Activated CD4-positive, alpha-beta T cell treated with anti-CD3 and anti-CD28 coated beads, Interleukin-2, amount 10 ng/mL, durations not matched to agents 24 days and 14 days (primary cell): ENCODE measurements at regions of chr10 and their contacts with region 1.

Region 1: GRCh38 chr10:68331455-68332258 is at the start of gene HNRNPH3:
- DNase-seq: peak; percentile 100
- H3K4me3 Mint-ChIP-seq: peak within 1 kb of the TSS; percentile 99
- H3K27ac Mint-ChIP-seq: peak within 1 kb of the TSS; percentile 100
- H3K4me1 Mint-ChIP-seq: peaks cover 47% of the 10 kb centered on the region
- H3K27me3 Mint-ChIP-seq: peaks cover 2% of the 10 kb centered on the region
- total RNA-seq, gene HNRNPH3: 200 and 206 TPM in 2 replicates

Region 2: GRCh38 chr10:67764012-67764822 is 567.4 kb before region 1 on chr10:
- intact Hi-C with region 1: loop called (anchors 1 kb)
- DNase-seq: peak; percentile 99
- H3K4me3 Mint-ChIP-seq: peak overlapping the region; percentile 85
- H3K27ac Mint-ChIP-seq: peak overlapping the region; percentile 92
- H3K4me1 Mint-ChIP-seq: peaks cover 23% of the 10 kb centered on the region
- H3K27me3 Mint-ChIP-seq: peaks cover 8% of the 10 kb centered on the region

Region 3: GRCh38 chr10:67884313-67884841 is 447.3 kb before region 1 on chr10 and contains the start of gene SIRT1:
- intact Hi-C with region 1: loop called (anchors 2 kb)
- DNase-seq: peak; percentile 98
- H3K4me3 Mint-ChIP-seq: peak within 1 kb of the TSS; percentile 97
- H3K27ac Mint-ChIP-seq: peak within 1 kb of the TSS; percentile 90
- H3K4me1 Mint-ChIP-seq: peaks cover 23% of the 10 kb centered on the region
- H3K27me3 Mint-ChIP-seq: peaks cover 3% of the 10 kb centered on the region
- total RNA-seq, gene SIRT1: 27.1 and 27.8 TPM in 2 replicates

Region 4: DNA sequence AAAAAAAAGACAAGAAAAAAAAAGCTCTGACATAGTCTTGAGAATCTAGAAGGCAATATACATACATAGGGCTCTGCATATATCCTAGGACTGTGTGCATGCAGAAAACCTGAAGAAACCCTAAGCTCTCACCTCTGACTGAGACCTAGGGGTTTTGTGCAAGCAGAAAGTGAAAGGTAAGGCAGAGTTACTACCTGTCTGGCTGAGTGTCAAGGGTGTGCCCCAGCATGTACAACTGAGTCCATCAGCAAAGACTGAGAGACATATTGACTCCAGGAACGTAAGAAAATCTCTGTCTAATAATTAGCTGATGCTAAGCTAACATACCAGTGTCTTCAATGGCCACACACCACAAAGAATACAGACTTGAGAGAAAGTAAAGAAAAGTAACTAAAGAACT is 16.1 kb before region 1 on chr10:
- intact Hi-C with region 1: loop called (anchors 2 kb)
- DNase-seq: no peak
- H3K4me3 Mint-ChIP-seq: no peak overlapping the region
- H3K27ac Mint-ChIP-seq: no peak overlapping the region
- H3K4me1 Mint-ChIP-seq: peaks cover 10% of the 10 kb centered on the region
- H3K27me3 Mint-ChIP-seq: no peaks in the 10 kb centered on the region

Region 5: GRCh38 chr10:68526626-68527307 is 195.1 kb after region 1 on chr10:
- intact Hi-C with region 1: loop called (anchors 1 kb)
- DNase-seq: no peak
- H3K4me3 Mint-ChIP-seq: peak overlapping the region; percentile 97
- H3K27ac Mint-ChIP-seq: peak overlapping the region; percentile 87
- H3K4me1 Mint-ChIP-seq: peaks cover 6% of the 10 kb centered on the region
- H3K27me3 Mint-ChIP-seq: no peaks in the 10 kb centered on the region